Activated T-helper 1 cell treated with anti-CD3 and anti-CD28 coated beads, Interleukin-12 subunit alpha, Interleukin-12 subunit beta, Interleukin-2, Interleukin-4 antibody, amounts not matched to agents 30 ng/mL and 10 ng/mL and 1 ng/mL, durations not matched to agents 14 hours and 24 hours and 36 hours (primary cell): ENCODE measurements at regions of chr19 and their contacts with region 1.

Region 1: GRCh38 chr19:49443366-49444099 is 2.2 kb upstream of the SLC17A7 start:
- DNase-seq: peak; percentile 90
- H3K4me3 Mint-ChIP-seq: peak overlapping the region; percentile 82
- H3K27ac Mint-ChIP-seq: peak overlapping the region; percentile 88
- H3K4me1 Mint-ChIP-seq: peaks cover 42% of the 10 kb centered on the region
- H3K27me3 Mint-ChIP-seq: peaks cover 37% of the 10 kb centered on the region

Region 2: GRCh38 chr19:49264258-49264657 is 179.3 kb before region 1 on chr19:
- intact Hi-C with region 1: loop called (anchors 10 kb)
- DNase-seq: no peak
- H3K4me3 Mint-ChIP-seq: no peak overlapping the region
- H3K27ac Mint-ChIP-seq: no peak overlapping the region
- H3K4me1 Mint-ChIP-seq: no peaks in the 10 kb centered on the region
- H3K27me3 Mint-ChIP-seq: peaks cover 28% of the 10 kb centered on the region

Region 3: GRCh38 chr19:49391581-49392399 is 51.7 kb before region 1 on chr19:
- intact Hi-C with region 1: loop called (anchors 1 kb)
- DNase-seq: peak; percentile 71
- H3K4me3 Mint-ChIP-seq: no peak overlapping the region
- H3K27ac Mint-ChIP-seq: peak overlapping the region; percentile 5
- H3K4me1 Mint-ChIP-seq: peaks cover 12% of the 10 kb centered on the region
- H3K27me3 Mint-ChIP-seq: peaks cover 3% of the 10 kb centered on the region

Region 4: GRCh38 chr19:49422407-49423070 is 21.0 kb before region 1 on chr19:
- intact Hi-C with region 1: loop called (anchors 1 kb)
- DNase-seq: peak; percentile 58
- H3K4me3 Mint-ChIP-seq: peak overlapping the region; percentile 80
- H3K27ac Mint-ChIP-seq: peak overlapping the region; percentile 68
- H3K4me1 Mint-ChIP-seq: peaks cover 47% of the 10 kb centered on the region
- H3K27me3 Mint-ChIP-seq: peaks cover 86% of the 10 kb centered on the region

Region 5: GRCh38 chr19:49468746-49469447 is 25.4 kb after region 1 on chr19:
- intact Hi-C with region 1: loop called (anchors 1 kb)
- DNase-seq: peak; percentile 92
- H3K4me3 Mint-ChIP-seq: peak overlapping the region; percentile 82
- H3K27ac Mint-ChIP-seq: peak overlapping the region; percentile 99
- H3K4me1 Mint-ChIP-seq: peaks cover 32% of the 10 kb centered on the region
- H3K27me3 Mint-ChIP-seq: no peaks in the 10 kb centered on the region

Region 6: DNA sequence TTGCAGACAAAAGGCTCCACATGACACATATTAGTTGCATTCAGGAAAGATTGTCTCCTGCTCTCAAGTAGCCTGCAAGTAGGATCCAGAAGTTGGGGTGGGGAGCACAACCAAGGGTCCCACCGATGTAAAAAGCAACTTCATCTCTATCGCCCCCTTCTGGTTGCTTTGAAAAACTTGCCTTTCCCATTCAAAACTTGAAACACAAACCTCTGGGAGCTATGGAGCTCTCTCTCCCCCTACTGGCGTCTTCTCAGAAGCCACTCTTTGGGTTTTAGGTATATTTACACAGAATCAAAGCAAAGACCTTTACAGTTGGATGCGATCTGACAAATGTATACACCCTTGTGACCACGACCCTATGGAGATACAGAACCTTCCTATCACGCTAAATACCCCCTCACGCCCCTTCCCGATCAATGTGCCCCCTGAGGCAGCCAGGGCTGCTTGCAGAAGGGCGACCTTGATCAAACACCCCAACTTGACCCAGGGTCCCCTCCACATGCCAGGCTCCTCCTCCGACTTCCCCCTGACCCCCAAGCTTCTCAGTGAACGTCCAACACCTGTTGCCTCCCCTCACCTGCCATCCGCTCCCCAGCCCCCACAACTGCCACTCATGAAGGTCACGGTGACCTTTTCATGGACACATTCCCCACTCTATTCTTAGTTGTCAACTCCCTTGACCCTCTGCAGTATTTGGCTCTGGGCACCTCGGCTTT is 126.8 kb after region 1 on chr19:
- intact Hi-C with region 1: no loop called
- DNase-seq: peak; percentile 69
- H3K4me3 Mint-ChIP-seq: peak overlapping the region; percentile 66
- H3K27ac Mint-ChIP-seq: peak overlapping the region; percentile 80
- H3K4me1 Mint-ChIP-seq: peaks cover 46% of the 10 kb centered on the region
- H3K27me3 Mint-ChIP-seq: no peaks in the 10 kb centered on the region

Region 7: DNA sequence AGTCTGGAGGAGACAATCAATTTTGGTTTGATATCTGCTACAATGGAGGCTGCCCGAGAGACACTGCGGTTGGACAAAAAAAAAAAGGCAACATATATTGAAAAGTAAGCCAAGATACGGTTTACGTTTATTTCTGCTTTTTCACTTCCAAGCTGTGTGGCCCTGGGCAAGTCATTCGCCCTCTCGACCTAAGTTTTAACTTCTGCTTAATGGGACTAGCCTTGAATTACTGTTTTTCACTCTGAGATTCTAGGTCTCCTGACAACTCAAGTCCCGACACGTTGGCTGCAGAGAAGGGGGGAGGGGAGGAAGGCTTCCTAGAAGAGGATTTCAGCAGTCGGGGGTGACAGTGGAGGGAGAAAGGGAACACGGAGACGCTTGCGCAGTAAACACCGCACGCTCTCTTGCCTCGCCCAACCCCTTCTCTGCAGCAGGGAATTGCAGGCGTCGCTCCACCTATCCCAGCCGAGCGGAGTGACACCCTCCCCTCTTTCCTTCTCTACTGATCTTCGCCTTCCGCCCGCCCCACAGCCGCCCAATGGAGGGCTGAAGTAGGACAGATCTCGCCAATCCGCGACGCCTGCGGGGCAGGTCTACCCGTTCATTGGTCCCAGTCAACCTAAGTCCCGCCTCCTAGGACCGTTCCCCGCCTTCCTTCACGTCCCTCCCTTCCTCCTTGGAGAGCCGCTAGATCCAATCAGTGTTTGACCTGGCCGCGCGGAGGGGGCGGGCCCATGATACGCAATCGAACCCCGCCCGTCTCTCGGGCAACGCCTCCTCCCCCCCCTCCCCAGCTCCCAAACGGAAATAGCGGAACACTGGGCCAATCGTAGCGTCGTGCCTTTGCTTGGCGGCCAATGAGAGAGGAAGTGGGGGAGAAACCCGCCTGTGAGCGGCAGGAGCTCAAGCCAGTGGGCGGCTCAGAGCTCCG is 322.7 kb after region 1 on chr19:
- intact Hi-C with region 1: loop called (anchors 5 kb)
- DNase-seq: peak; percentile 99
- H3K4me3 Mint-ChIP-seq: peak overlapping the region; percentile 89
- H3K27ac Mint-ChIP-seq: peak overlapping the region; percentile 91
- H3K4me1 Mint-ChIP-seq: peaks cover 24% of the 10 kb centered on the region
- H3K27me3 Mint-ChIP-seq: no peaks in the 10 kb centered on the region